ENCODE measurements at regions of chr1 and their contacts with region 1.

Region 1: GRCh38 chr1:156525071-156525501 is 24.5 kb upstream of the MEF2D start:
- DNase-seq: peak in 1 of 3 donors; percentile 36
- H3K4me3 ChIP-seq: peak overlapping the region; percentile 3 to 64 (median 49)
- H3K4me3 Mint-ChIP-seq: peak overlapping the region; percentile 72 to 91
- H3K27ac ChIP-seq: peak overlapping the region; percentile 61 to 81
- H3K27ac Mint-ChIP-seq: peak overlapping the region; percentile 88 to 98 (median 96)
- H3K4me1 ChIP-seq: peaks cover 40 to 53% of the 10 kb centered on the region in 2 donors
- H3K4me1 Mint-ChIP-seq: peaks cover 47% of the 10 kb centered on the region
- H3K27me3 ChIP-seq: no peaks in the 10 kb centered on the region
- H3K27me3 Mint-ChIP-seq: no peaks in the 10 kb centered on the region
- CTCF ChIP-seq: no peak

Region 2: GRCh38 chr1:156565519-156565918 is 40.4 kb after region 1 on chr1:
- intact Hi-C with region 1: loop called in 1 of 2 experiments (anchors 5 kb)
- DNase-seq: no peak
- H3K4me3 ChIP-seq: no peak overlapping the region
- H3K4me3 Mint-ChIP-seq: no peak overlapping the region
- H3K27ac ChIP-seq: no peak overlapping the region
- H3K27ac Mint-ChIP-seq: peak overlapping the region in 1 of 7 donors; percentile 6
- H3K4me1 ChIP-seq: peaks cover 0 to under 1% of the 10 kb centered on the region in 2 donors
- H3K4me1 Mint-ChIP-seq: peaks cover 3% of the 10 kb centered on the region
- H3K27me3 ChIP-seq: no peaks in the 10 kb centered on the region
- H3K27me3 Mint-ChIP-seq: peaks cover 0 to 3% (median 3%) of the 10 kb centered on the region in 3 donors
- CTCF ChIP-seq: no peak

Measured in CD14-positive monocyte (primary cell).